Calu3 (cell line): ENCODE measurements at regions of chr7 and their contacts with region 1.

Region 1: GRCh38 chr7:6221340-6222319 is 50.8 kb downstream of the CYTH3 start:
- DNase-seq: no peak
- H3K4me3 Mint-ChIP-seq: no peak overlapping the region
- H3K27ac Mint-ChIP-seq: no peak overlapping the region
- H3K4me1 Mint-ChIP-seq: peaks cover 48% of the 10 kb centered on the region
- H3K27me3 Mint-ChIP-seq: no peaks in the 10 kb centered on the region
- CTCF ChIP-seq: no peak

Region 2: DNA sequence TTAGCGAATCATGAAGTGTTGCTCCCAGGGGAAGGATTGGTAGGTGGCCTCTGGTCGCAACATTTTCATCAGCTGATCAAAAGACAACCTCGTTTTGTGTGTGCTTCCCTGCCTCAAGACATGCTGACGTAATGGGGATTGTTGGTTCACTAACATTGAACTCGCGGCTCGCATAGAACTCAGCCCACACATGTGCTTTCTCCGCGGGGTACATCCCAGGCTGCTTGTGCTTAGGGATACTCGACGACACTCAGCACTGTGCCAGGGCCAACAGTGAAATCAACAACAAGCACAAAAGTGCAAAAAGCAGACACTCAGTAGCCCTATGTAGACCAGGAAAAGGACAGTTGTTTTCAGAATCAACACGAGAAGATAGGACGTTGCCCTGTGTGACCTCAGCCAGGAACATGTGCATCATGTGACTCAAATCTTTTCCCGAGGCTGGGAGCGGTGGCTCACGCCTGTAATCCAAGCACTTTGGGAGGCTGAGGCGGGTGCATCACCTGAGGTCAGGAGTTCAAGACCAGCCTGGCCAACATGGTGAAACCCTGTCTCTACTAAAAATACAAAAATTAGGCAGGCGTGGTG is 1010.8 kb before region 1 on chr7:
- CTCF ChIA-PET with region 1: no interaction called
- intact Hi-C with region 1: no loop called
- DNase-seq: no peak
- H3K4me3 Mint-ChIP-seq: no peak overlapping the region
- H3K27ac Mint-ChIP-seq: no peak overlapping the region
- H3K4me1 Mint-ChIP-seq: no peaks in the 10 kb centered on the region
- H3K27me3 Mint-ChIP-seq: no peaks in the 10 kb centered on the region
- CTCF ChIP-seq: no peak

Region 3: DNA sequence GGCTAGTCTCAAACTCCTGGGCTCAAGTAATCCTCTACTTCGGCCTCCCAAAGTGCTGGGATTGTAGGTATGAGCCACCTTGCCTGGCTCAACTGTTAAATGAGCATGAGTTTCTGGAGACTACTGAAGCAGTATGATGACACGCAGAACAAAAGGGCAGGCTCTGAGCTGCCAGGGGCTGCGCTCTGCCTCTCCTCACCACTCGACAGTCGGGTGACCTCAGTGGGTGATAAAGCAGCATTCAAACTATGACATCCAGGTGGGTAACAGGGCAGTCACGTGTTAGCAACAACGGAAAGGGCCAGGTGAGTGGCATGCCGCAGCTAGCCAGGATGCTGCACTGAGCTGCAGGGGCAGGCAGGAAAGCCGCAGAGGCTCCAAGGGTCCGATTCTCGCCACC is 20.7 kb before region 1 on chr7:
- CTCF ChIA-PET with region 1: interaction called, 3 read pairs
- intact Hi-C with region 1: loop called (anchors 2 kb)
- DNase-seq: no peak
- H3K4me3 Mint-ChIP-seq: no peak overlapping the region
- H3K27ac Mint-ChIP-seq: no peak overlapping the region
- H3K4me1 Mint-ChIP-seq: peaks cover 13% of the 10 kb centered on the region
- H3K27me3 Mint-ChIP-seq: no peaks in the 10 kb centered on the region
- CTCF ChIP-seq: no peak